CD14-positive monocyte (primary cell): ENCODE measurements at regions of chr13 and their contacts with region 1.

Region 1: DNA sequence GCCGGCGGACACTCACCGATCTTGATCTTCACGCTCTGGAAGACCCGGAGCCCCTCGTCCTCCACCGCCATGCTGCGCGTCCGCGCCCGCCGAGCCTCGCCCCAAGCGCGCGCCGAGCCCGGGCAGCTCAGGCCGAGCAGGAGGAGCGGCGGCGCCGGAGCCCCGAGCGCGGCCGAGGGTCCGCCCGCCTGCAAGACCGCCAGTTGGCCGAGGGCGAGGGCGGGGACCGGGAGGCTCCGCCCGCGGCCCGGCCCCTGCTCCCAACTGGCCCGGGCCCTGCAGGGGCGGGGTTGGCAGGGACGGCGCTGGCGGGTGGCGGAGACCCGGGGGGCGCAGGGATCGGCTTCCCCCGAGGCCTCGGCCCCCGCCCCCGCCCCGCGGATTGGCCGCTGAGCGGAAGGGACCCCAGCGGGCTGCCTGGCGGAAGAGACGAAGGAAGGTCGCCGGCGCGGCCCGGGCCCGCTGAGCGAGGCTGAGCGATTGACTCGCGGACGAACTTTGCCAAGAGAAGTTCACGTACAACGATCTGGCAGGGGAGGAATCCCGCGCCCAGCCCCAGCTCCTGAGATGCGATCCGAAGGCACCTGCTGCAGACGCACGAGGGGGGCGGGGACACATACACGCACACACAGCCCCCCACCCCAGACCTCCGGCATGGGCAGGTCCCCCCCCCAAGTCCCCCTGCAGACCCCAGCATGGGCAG is at the start of gene RASA3:
- DNase-seq: peak; percentile 44 to 66 (median 51)
- H3K4me3 ChIP-seq: peak within 1 kb of the TSS; percentile 61 to 98 (median 85)
- H3K4me3 Mint-ChIP-seq: peak within 1 kb of the TSS; percentile 100
- H3K27ac ChIP-seq: peak within 1 kb of the TSS; percentile 86 to 95
- H3K27ac Mint-ChIP-seq: peak within 1 kb of the TSS; percentile 89 to 99 (median 97)
- H3K4me1 ChIP-seq: peaks cover 32 to 41% of the 10 kb centered on the region in 2 donors
- H3K4me1 Mint-ChIP-seq: peaks cover 37% of the 10 kb centered on the region
- H3K27me3 ChIP-seq: no peaks in the 10 kb centered on the region
- H3K27me3 Mint-ChIP-seq: peaks cover 0 to 5% (median 4%) of the 10 kb centered on the region in 3 donors
- CTCF ChIP-seq: no peak
- polyA plus RNA-seq, gene RASA3: 9.0 to 32.6 (median 16.6) TPM

Region 2: GRCh38 chr13:113837554-113838355 is 294.8 kb before region 1 on chr13:
- intact Hi-C with region 1: no loop called
- DNase-seq: no peak
- H3K4me3 ChIP-seq: no peak overlapping the region
- H3K4me3 Mint-ChIP-seq: no peak overlapping the region
- H3K27ac ChIP-seq: no peak overlapping the region
- H3K27ac Mint-ChIP-seq: peak overlapping the region in 1 of 7 donors; percentile 80
- H3K4me1 ChIP-seq: no peaks in the 10 kb centered on the region
- H3K4me1 Mint-ChIP-seq: peaks cover 11% of the 10 kb centered on the region
- H3K27me3 ChIP-seq: peaks cover 0 to 14% of the 10 kb centered on the region in 2 donors
- H3K27me3 Mint-ChIP-seq: peaks cover 14 to 23% (median 14%) of the 10 kb centered on the region in 3 donors
- CTCF ChIP-seq: no peak

Region 3: GRCh38 chr13:114065141-114065925 is 67.2 kb before region 1 on chr13:
- intact Hi-C with region 1: loop called in 1 of 2 experiments (anchors 5 kb)
- DNase-seq: peak; percentile 96 to 98 (median 97)
- H3K4me3 ChIP-seq: peak overlapping the region; percentile 19 to 72 (median 21)
- H3K4me3 Mint-ChIP-seq: peak overlapping the region; percentile 79 to 89
- H3K27ac ChIP-seq: peak overlapping the region; percentile 93 to 99
- H3K27ac Mint-ChIP-seq: peak overlapping the region; percentile 98 to 100 (median 99)
- H3K4me1 ChIP-seq: peaks cover 75 to 84% of the 10 kb centered on the region in 2 donors
- H3K4me1 Mint-ChIP-seq: peaks cover 70% of the 10 kb centered on the region
- H3K27me3 ChIP-seq: no peaks in the 10 kb centered on the region
- H3K27me3 Mint-ChIP-seq: peaks cover 0 to 1% (median 0%) of the 10 kb centered on the region in 3 donors
- CTCF ChIP-seq: no peak

Region 4: GRCh38 chr13:114166381-114167131 is 34.0 kb after region 1 on chr13:
- intact Hi-C with region 1: loop called in 1 of 2 experiments (anchors 5 kb)
- DNase-seq: no peak
- H3K4me3 ChIP-seq: no peak overlapping the region
- H3K4me3 Mint-ChIP-seq: peak overlapping the region in 1 of 2 donors; percentile 39
- H3K27ac ChIP-seq: no peak overlapping the region
- H3K27ac Mint-ChIP-seq: peak overlapping the region in 1 of 7 donors; percentile 78
- H3K4me1 ChIP-seq: peaks cover 36 to 38% of the 10 kb centered on the region in 2 donors
- H3K4me1 Mint-ChIP-seq: peaks cover 38% of the 10 kb centered on the region
- H3K27me3 ChIP-seq: no peaks in the 10 kb centered on the region
- H3K27me3 Mint-ChIP-seq: peaks cover 1 to 3% (median 2%) of the 10 kb centered on the region in 3 donors
- CTCF ChIP-seq: no peak

Region 5: GRCh38 chr13:114226699-114227323 is 94.2 kb after region 1 on chr13:
- intact Hi-C with region 1: loop called in 1 of 2 experiments (anchors 5 kb)
- DNase-seq: peak; percentile 68 to 80 (median 79)
- H3K4me3 ChIP-seq: no peak overlapping the region
- H3K4me3 Mint-ChIP-seq: no peak overlapping the region
- H3K27ac ChIP-seq: no peak overlapping the region
- H3K27ac Mint-ChIP-seq: peak overlapping the region in 1 of 7 donors; percentile 43
- H3K4me1 ChIP-seq: peaks cover 36 to 40% of the 10 kb centered on the region in 2 donors
- H3K4me1 Mint-ChIP-seq: peaks cover 42% of the 10 kb centered on the region
- H3K27me3 ChIP-seq: no peaks in the 10 kb centered on the region
- H3K27me3 Mint-ChIP-seq: peaks cover 9 to 12% (median 11%) of the 10 kb centered on the region in 3 donors
- CTCF ChIP-seq: peak; percentile 83

Region 6: GRCh38 chr13:114248011-114248410 is 115.4 kb after region 1 on chr13:
- intact Hi-C with region 1: no loop called
- DNase-seq: no peak
- H3K4me3 ChIP-seq: no peak overlapping the region
- H3K4me3 Mint-ChIP-seq: no peak overlapping the region
- H3K27ac ChIP-seq: no peak overlapping the region
- H3K27ac Mint-ChIP-seq: no peak overlapping the region
- H3K4me1 ChIP-seq: no peaks in the 10 kb centered on the region
- H3K4me1 Mint-ChIP-seq: no peaks in the 10 kb centered on the region
- H3K27me3 ChIP-seq: no peaks in the 10 kb centered on the region
- H3K27me3 Mint-ChIP-seq: no peaks in the 10 kb centered on the region
- CTCF ChIP-seq: no peak